A549 (cell line): ENCODE measurements at regions of chr5 and their contacts with region 1.

Region 1: GRCh38 chr5:154287136-154287535 is 96.6 kb downstream of the GALNT10 start:
- DNase-seq: peak; percentile 68 to 88
- ATAC-seq: peak; percentile 71 to 83
- H3K4me3 ChIP-seq: peak overlapping the region; percentile 37
- H3K27ac ChIP-seq: peak overlapping the region; percentile 97
- H3K4me1 ChIP-seq: peaks cover 85% of the 10 kb centered on the region
- CTCF ChIP-seq: no peak
- EP300 ChIP-seq: peak; percentile 87 to 92; a peak in 3 of 5 replicates
- POLR2A ChIP-seq: no peak
- RAD21 ChIP-seq: peak; percentile 37 to 66

Region 2: GRCh38 chr5:154031937-154032489 is 255.1 kb before region 1 on chr5:
- CTCF ChIA-PET with region 1: no interaction called
- POLR2A ChIA-PET with region 1: no interaction called
- DNase-seq: no peak
- ATAC-seq: no peak
- H3K4me3 ChIP-seq: no peak overlapping the region
- H3K27ac ChIP-seq: no peak overlapping the region
- H3K4me1 ChIP-seq: no peaks in the 10 kb centered on the region
- CTCF ChIP-seq: no peak
- EP300 ChIP-seq: no peak
- POLR2A ChIP-seq: no peak
- RAD21 ChIP-seq: no peak

Region 3: DNA sequence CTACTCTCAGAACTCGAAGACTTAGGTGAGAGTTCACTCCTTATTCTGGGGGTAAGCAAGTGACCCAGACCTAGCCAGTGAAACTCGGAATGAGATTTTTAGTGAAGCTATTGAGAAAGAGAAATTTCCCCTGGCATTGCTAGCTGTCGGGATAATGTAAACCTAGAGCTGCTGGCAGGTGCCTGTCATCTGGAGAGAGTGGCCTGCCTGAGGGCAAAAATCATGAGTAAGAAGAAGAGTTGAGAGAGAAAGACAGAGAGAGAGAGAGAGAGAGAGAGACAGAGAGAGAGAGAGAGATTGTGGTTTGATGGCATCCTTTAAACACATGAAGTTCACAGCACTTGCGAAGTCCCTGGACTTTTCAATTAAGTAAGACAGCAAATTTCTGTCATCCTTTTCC is 113.7 kb before region 1 on chr5:
- CTCF ChIA-PET with region 1: no interaction called
- POLR2A ChIA-PET with region 1: no interaction called
- DNase-seq: no peak
- ATAC-seq: no peak
- H3K4me3 ChIP-seq: no peak overlapping the region
- H3K27ac ChIP-seq: no peak overlapping the region
- H3K4me1 ChIP-seq: no peaks in the 10 kb centered on the region
- CTCF ChIP-seq: no peak
- EP300 ChIP-seq: no peak
- POLR2A ChIP-seq: no peak
- RAD21 ChIP-seq: no peak

Region 4: GRCh38 chr5:154189819-154190594 is 97.1 kb before region 1 on chr5:
- CTCF ChIA-PET with region 1: interaction called, 4 read pairs
- POLR2A ChIA-PET with region 1: interaction called, 12 read pairs
- DNase-seq: peak; percentile 83 to 91
- ATAC-seq: peak; percentile 88 to 92
- H3K4me3 ChIP-seq: peak overlapping the region; percentile 65
- H3K27ac ChIP-seq: peak overlapping the region; percentile 96 to 99
- H3K4me1 ChIP-seq: peaks cover 43% of the 10 kb centered on the region
- CTCF ChIP-seq: peak; percentile 44
- EP300 ChIP-seq: no peak
- POLR2A ChIP-seq: peak; percentile 52
- RAD21 ChIP-seq: peak; percentile 31 to 53; a peak in 3 of 5 replicates

Region 5: GRCh38 chr5:154267516-154267915 is 19.6 kb before region 1 on chr5:
- CTCF ChIA-PET with region 1: no interaction called
- POLR2A ChIA-PET with region 1: no interaction called
- DNase-seq: no peak
- ATAC-seq: peak in 1 of 2 experiments; percentile 36; a peak in 1 of 6 replicates
- H3K4me3 ChIP-seq: no peak overlapping the region
- H3K27ac ChIP-seq: peak overlapping the region; percentile 55 to 66; a peak in 5 of 6 replicates
- H3K4me1 ChIP-seq: peaks cover 51% of the 10 kb centered on the region
- CTCF ChIP-seq: no peak
- EP300 ChIP-seq: no peak
- POLR2A ChIP-seq: no peak
- RAD21 ChIP-seq: no peak